GM10248 (cell line): ENCODE measurements at regions of chr15 and their contacts with region 1.

Region 1: GRCh38 chr15:89171136-89172072 is 50.0 kb downstream of the RLBP1 start:
- DNase-seq: peak; percentile 33
- CTCF ChIP-seq: peak; percentile 43

Region 2: DNA sequence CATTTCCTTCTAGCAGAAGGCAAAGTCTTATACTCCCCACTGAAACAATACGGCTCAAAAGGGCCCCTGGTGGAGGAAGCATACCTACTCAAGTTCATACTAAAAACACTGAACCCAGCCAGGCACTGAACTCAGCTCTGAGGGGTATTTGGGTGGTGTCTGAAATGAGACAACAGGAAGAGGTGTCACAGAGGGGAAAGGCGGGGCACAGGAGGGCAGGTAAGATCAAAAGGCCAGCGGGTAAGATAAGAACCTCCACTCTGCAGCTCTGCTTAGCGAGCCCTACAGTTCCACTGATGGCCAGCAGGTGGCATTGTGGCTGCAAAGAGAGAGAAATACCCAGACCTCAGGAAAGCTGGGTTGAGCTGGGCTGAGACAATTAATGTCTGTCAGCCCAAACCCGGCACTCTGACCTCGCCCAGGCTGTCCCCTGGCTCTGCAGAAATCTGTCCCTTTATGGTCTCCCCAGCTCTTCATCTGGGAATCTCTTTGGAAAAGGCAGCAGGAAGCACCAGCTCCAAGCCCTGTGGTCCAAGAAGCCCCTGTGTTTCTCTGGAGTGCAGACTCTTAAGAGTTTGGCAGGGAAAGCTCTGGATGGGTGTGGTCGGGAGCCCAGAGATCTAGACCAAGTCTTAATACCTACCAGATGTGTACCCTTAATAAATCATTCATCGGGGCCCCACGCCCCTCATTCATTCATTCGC is 266.6 kb before region 1 on chr15:
- CTCF ChIA-PET with region 1: interaction called, 16 read pairs
- POLR2A ChIA-PET with region 1: no interaction called
- DNase-seq: peak; percentile 85
- CTCF ChIP-seq: peak; percentile 93

Region 3: GRCh38 chr15:89057504-89058133 is 113.8 kb before region 1 on chr15:
- CTCF ChIA-PET with region 1: interaction called, 239 read pairs
- POLR2A ChIA-PET with region 1: no interaction called
- DNase-seq: peak; percentile 83
- CTCF ChIP-seq: peak; percentile 98

Region 4: DNA sequence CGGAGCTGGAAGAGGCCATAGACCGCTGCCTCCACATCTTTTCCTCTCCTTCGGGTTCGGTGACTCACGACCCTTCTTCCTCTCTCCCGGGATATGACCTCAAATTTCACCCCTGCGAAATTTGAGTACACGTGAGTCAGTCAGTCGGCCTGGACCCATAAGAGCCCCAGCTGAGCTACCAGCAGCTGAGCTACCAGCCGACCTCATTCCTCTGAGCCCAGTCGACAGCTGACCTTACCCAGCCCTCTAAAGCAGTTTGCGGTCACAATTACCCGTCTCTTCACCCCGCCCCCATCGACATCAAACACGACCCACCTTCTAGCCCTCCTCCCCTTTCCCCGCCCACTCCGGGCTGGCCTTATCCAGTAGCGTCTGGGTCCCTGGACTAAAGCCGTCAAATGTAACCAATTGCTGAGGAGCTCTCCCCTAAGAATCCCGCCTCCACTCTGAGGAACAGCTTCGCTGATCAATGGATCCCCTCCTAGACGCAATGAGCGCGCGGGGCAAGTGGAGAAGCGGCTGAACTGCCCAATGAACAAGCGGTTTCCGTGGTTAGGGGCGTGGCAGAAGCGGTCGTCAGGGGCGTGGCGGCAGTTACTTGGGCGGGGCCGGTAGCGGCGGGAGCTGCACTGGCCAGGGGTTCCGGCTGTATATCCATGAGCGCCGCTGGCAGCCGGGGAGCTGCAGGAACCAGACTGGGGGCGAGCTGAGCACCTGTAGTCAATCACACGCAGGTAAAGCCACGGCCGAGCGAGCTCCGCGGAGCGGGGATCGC is 83.4 kb before region 1 on chr15 and contains the start of gene ABHD2:
- CTCF ChIA-PET with region 1: interaction called, 15 read pairs
- POLR2A ChIA-PET with region 1: no interaction called
- DNase-seq: peak; percentile 94
- CTCF ChIP-seq: no peak

Region 5: GRCh38 chr15:89150762-89151664 is 20.4 kb before region 1 on chr15:
- CTCF ChIA-PET with region 1: interaction called, 34 read pairs
- POLR2A ChIA-PET with region 1: no interaction called
- DNase-seq: no peak
- CTCF ChIP-seq: no peak

Region 6: DNA sequence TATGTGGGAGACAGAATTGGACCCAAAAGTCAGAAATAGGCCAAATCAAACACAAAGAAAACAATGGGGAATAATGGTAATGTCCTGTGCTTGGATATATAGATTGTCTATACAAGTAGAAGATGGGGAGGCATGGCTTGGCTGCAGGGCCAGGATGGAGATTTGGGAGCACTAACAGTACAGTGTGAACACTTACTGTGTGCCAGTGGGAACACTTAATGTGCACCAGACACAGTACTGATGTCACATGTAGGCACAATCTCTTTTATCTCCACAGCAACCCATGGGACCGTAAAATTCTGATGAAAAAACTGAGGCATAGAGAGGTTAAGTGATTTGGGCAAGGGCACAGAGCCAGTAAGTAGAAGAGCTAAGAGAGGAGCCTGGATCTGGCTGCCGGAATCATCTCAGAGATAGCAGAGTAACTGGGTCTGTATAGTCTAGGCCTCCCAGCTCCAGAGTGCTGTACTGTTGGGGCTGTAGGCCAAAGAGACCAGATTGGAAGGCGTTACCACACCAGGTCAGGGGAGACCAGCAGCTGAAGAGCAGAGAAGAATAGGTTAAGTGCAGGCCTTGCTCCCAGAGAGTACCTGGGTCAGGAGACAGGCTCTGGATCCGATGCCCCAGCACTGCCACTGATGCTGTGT is 13.4 kb before region 1 on chr15:
- CTCF ChIA-PET with region 1: interaction called, 34 read pairs
- POLR2A ChIA-PET with region 1: no interaction called
- DNase-seq: no peak
- CTCF ChIP-seq: no peak

Region 7: GRCh38 chr15:89184357-89184756 is 13.0 kb after region 1 on chr15:
- CTCF ChIA-PET with region 1: interaction called, 85 read pairs
- POLR2A ChIA-PET with region 1: no interaction called
- DNase-seq: no peak
- CTCF ChIP-seq: no peak

Region 8: GRCh38 chr15:89543389-89543788 is 372.0 kb after region 1 on chr15:
- CTCF ChIA-PET with region 1: no interaction called
- POLR2A ChIA-PET with region 1: no interaction called
- DNase-seq: no peak
- CTCF ChIP-seq: no peak